Activated B cell treated with CpG ODN at 0.5 μM for 24 hours (primary cell): ENCODE measurements at regions of chr20 and their contacts with region 1.

Region 1: GRCh38 chr20:13492001-13492481 is 146.7 kb downstream of the TASP1 start:
- DNase-seq: no peak
- ATAC-seq: no peak
- H3K4me3 Mint-ChIP-seq: no peak overlapping the region
- H3K27ac Mint-ChIP-seq: no peak overlapping the region
- H3K4me1 Mint-ChIP-seq: no peaks in the 10 kb centered on the region
- H3K27me3 Mint-ChIP-seq: no peaks in the 10 kb centered on the region
- CTCF ChIP-seq: no peak

Region 2: GRCh38 chr20:13341781-13342277 is 150.2 kb before region 1 on chr20:
- CTCF ChIA-PET with region 1: no interaction called
- POLR2A ChIA-PET with region 1: no interaction called
- intact Hi-C with region 1: no loop called
- DNase-seq: no peak
- ATAC-seq: no peak
- H3K4me3 Mint-ChIP-seq: no peak overlapping the region
- H3K27ac Mint-ChIP-seq: no peak overlapping the region
- H3K4me1 Mint-ChIP-seq: no peaks in the 10 kb centered on the region
- H3K27me3 Mint-ChIP-seq: peaks cover 3% of the 10 kb centered on the region
- CTCF ChIP-seq: no peak

Region 3: DNA sequence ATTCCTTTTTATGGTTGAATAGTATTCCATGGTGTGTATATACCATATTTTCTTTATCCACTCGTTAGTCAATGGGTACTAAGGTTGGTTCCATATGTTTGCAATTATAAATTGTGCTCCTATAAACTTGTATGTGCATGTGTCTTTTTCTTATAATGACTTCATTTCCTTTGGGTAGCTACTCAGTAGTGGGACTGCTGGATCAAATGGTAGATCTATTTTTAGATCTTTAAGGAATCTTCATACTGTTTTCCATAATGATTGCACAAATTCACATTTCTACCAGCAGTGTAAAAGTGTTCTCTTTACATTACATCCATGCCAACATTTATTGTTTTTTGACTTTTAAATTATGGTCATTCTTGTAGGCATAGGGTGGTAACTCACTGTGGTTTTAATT is 17.6 kb before region 1 on chr20:
- CTCF ChIA-PET with region 1: no interaction called
- POLR2A ChIA-PET with region 1: no interaction called
- intact Hi-C with region 1: no loop called
- DNase-seq: no peak
- ATAC-seq: no peak
- H3K4me3 Mint-ChIP-seq: no peak overlapping the region
- H3K27ac Mint-ChIP-seq: no peak overlapping the region
- H3K4me1 Mint-ChIP-seq: no peaks in the 10 kb centered on the region
- H3K27me3 Mint-ChIP-seq: no peaks in the 10 kb centered on the region
- CTCF ChIP-seq: no peak

Region 4: GRCh38 chr20:13507646-13508045 is 15.6 kb after region 1 on chr20:
- CTCF ChIA-PET with region 1: no interaction called
- POLR2A ChIA-PET with region 1: no interaction called
- intact Hi-C with region 1: loop called (anchors 2 kb)
- DNase-seq: no peak
- ATAC-seq: no peak
- H3K4me3 Mint-ChIP-seq: no peak overlapping the region
- H3K27ac Mint-ChIP-seq: no peak overlapping the region
- H3K4me1 Mint-ChIP-seq: no peaks in the 10 kb centered on the region
- H3K27me3 Mint-ChIP-seq: no peaks in the 10 kb centered on the region
- CTCF ChIP-seq: no peak

Region 5: GRCh38 chr20:13638496-13639222 is 146.6 kb after region 1 on chr20 and contains the start of gene TASP1:
- CTCF ChIA-PET with region 1: no interaction called
- POLR2A ChIA-PET with region 1: no interaction called
- intact Hi-C with region 1: no loop called
- DNase-seq: peak; percentile 87
- ATAC-seq: peak; percentile 97
- H3K4me3 Mint-ChIP-seq: peak within 1 kb of the TSS; percentile 90
- H3K27ac Mint-ChIP-seq: peak within 1 kb of the TSS; percentile 87
- H3K4me1 Mint-ChIP-seq: peaks cover 14% of the 10 kb centered on the region
- H3K27me3 Mint-ChIP-seq: peaks cover 18% of the 10 kb centered on the region
- CTCF ChIP-seq: no peak
- total RNA-seq, gene TASP1: 17.6 and 20.6 TPM in 2 replicates